Activated naive CD4-positive, alpha-beta T cell treated with anti-CD3 and anti-CD28 coated beads, Interleukin-2, amount 10 ng/mL, durations not matched to agents 7 days and 5 days (primary cell): ENCODE measurements at regions of chr1 and their contacts with region 1.

Region 1: GRCh38 chr1:204763706-204764427 is 78.3 kb upstream of the LRRN2 start:
- DNase-seq: peak; percentile 84
- H3K4me3 Mint-ChIP-seq: peak overlapping the region; percentile 8
- H3K27ac Mint-ChIP-seq: no peak overlapping the region
- H3K4me1 Mint-ChIP-seq: peaks cover 9% of the 10 kb centered on the region
- H3K27me3 Mint-ChIP-seq: peaks cover 49% of the 10 kb centered on the region

Region 2: GRCh38 chr1:204558467-204558866 is 205.4 kb before region 1 on chr1:
- CTCF ChIA-PET with region 1: interaction called, 17 read pairs
- DNase-seq: no peak
- H3K4me3 Mint-ChIP-seq: no peak overlapping the region
- H3K27ac Mint-ChIP-seq: no peak overlapping the region
- H3K4me1 Mint-ChIP-seq: peaks cover 54% of the 10 kb centered on the region
- H3K27me3 Mint-ChIP-seq: no peaks in the 10 kb centered on the region

Region 3: GRCh38 chr1:204578867-204579664 is 184.8 kb before region 1 on chr1:
- CTCF ChIA-PET with region 1: interaction called, 15 read pairs
- DNase-seq: peak; percentile 82
- H3K4me3 Mint-ChIP-seq: peak overlapping the region; percentile 75
- H3K27ac Mint-ChIP-seq: peak overlapping the region; percentile 96
- H3K4me1 Mint-ChIP-seq: peaks cover 50% of the 10 kb centered on the region
- H3K27me3 Mint-ChIP-seq: no peaks in the 10 kb centered on the region

Region 4: GRCh38 chr1:204711947-204712701 is 51.7 kb before region 1 on chr1:
- CTCF ChIA-PET with region 1: no interaction called
- DNase-seq: no peak
- H3K4me3 Mint-ChIP-seq: no peak overlapping the region
- H3K27ac Mint-ChIP-seq: no peak overlapping the region
- H3K4me1 Mint-ChIP-seq: peaks cover 12% of the 10 kb centered on the region
- H3K27me3 Mint-ChIP-seq: peaks cover 62% of the 10 kb centered on the region

Region 5: DNA sequence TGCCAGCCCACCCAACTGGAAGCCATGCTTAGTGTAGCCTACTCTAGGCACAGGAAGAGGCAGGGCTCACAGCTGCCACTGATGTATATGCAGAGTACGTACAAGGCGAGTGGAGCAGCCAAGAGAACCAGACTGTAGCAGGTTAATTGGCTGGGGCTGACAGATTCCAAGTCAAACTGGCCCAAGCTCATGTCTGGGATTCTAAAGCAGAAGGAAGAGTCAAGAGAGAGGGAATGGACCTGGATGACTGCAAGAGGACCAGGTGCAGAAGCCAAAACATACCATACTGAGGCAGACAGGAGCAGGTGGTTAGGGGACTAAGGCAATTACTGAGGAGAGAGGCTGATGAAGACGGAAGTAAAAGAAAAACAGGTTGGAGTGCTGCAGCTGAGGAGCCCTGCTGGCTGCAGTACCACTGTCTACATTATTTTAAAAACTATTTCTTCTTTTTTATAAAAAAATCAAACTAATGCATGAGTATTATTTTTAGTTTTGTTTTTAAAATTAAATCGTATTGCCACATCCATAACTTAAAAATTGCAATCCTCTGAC is 27.0 kb before region 1 on chr1:
- CTCF ChIA-PET with region 1: no interaction called
- DNase-seq: no peak
- H3K4me3 Mint-ChIP-seq: no peak overlapping the region
- H3K27ac Mint-ChIP-seq: no peak overlapping the region
- H3K4me1 Mint-ChIP-seq: no peaks in the 10 kb centered on the region
- H3K27me3 Mint-ChIP-seq: peaks cover 26% of the 10 kb centered on the region

Region 6: GRCh38 chr1:204746838-204747442 is 16.9 kb before region 1 on chr1:
- CTCF ChIA-PET with region 1: interaction called, 24 read pairs
- DNase-seq: peak; percentile 69
- H3K4me3 Mint-ChIP-seq: no peak overlapping the region
- H3K27ac Mint-ChIP-seq: no peak overlapping the region
- H3K4me1 Mint-ChIP-seq: no peaks in the 10 kb centered on the region
- H3K27me3 Mint-ChIP-seq: peaks cover 44% of the 10 kb centered on the region

Region 7: GRCh38 chr1:204885288-204885711 is 121.4 kb after region 1 on chr1:
- CTCF ChIA-PET with region 1: no interaction called
- DNase-seq: no peak
- H3K4me3 Mint-ChIP-seq: no peak overlapping the region
- H3K27ac Mint-ChIP-seq: no peak overlapping the region
- H3K4me1 Mint-ChIP-seq: no peaks in the 10 kb centered on the region
- H3K27me3 Mint-ChIP-seq: peaks cover 19% of the 10 kb centered on the region

Region 8: DNA sequence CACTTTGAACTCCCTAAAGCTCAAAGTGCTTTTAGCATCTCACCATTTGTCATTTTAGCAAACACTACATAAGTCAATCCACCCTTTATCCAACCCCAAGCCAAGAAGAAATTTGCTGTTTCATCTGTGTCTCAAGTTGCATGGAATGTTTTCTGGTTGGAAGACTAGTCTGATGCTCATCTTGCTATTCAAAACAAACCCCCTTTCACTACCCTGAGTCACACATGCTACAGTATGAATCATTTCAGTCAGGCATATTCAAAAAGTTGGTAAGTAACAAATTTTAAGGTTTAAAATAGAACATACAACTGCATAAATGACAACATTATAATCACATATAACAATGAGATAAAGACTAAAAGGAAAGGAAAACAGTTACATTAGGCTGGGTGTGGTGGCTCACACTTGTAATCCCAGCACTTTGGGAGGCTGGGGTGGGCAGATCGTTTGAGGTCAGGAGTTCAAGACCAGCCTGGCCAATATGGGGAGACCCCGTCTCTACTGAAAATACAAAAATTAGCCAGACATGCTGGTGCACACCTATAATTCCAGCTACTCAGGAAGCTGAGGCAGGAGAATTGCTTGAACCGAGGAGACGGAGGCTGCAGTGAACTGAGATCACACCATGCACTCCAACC is 409.0 kb after region 1 on chr1:
- CTCF ChIA-PET with region 1: no interaction called
- DNase-seq: no peak
- H3K4me3 Mint-ChIP-seq: no peak overlapping the region
- H3K27ac Mint-ChIP-seq: no peak overlapping the region
- H3K4me1 Mint-ChIP-seq: peaks cover 29% of the 10 kb centered on the region
- H3K27me3 Mint-ChIP-seq: no peaks in the 10 kb centered on the region